Activated CD8-positive, alpha-beta T cell treated with anti-CD3 and anti-CD28 coated beads for 36 hours (primary cell): ENCODE measurements at regions of chr12 and their contacts with region 1.

Region 1: DNA sequence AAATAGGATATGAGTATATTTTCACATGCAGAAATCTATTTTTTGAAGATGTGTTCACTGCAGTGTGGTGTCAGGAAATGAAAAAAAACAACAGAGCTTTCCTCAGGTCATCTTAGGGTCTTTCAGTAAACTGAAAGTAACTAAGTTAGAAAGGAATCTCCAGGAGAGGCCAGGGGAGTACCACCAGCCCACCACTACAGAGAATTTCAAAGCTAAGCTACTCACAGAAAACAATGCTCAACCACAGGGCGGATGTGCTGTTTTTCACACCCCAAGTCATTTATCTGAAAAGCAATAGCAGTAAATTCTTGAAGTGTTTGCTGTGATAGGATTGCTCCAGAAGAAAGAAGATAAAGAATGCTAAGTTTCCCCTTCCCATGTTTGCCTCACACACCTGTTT is 79.0 kb downstream of the IFNG start:
- DNase-seq: peak; percentile 85
- ATAC-seq: peak; percentile 94
- H3K4me3 Mint-ChIP-seq: no peak overlapping the region
- H3K27ac Mint-ChIP-seq: peak overlapping the region; percentile 51
- H3K4me1 Mint-ChIP-seq: peaks cover 36% of the 10 kb centered on the region
- H3K27me3 Mint-ChIP-seq: no peaks in the 10 kb centered on the region
- CTCF ChIP-seq: no peak

Region 2: DNA sequence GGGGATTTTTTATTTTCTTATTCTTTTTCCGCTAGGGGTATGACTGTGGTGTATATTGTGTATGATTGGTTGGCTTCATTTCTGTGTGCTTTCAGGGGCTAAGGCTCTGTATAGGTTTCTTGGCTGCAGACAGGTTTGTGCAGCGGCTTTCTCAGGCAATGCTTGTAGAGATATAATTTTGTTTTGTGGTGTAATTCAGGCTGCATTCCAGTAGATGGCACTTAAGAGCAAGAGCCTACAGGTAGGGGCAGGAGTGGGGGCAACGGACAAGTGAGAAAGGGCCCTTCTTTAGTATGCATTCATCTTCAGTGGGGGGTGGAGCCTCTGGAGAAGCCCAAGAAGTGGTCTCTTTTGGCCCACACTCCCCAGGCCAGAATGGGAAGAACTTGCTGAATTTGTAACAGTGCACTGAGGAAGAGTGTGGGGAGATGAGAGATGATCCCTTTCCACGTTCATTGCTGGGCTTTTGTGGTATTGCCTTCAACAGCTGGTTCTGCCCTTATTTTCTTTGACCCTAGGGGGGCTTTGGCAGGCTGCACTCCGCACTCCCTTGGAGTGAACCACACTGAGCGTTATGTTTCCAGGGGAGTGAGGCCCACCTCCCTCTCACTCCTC is 12.7 kb before region 1 on chr12:
- CTCF ChIA-PET with region 1: interaction called, 20 read pairs
- POLR2A ChIA-PET with region 1: interaction called, 4 read pairs
- intact Hi-C with region 1: no loop called
- DNase-seq: peak; percentile 12
- ATAC-seq: peak; percentile 56
- H3K4me3 Mint-ChIP-seq: no peak overlapping the region
- H3K27ac Mint-ChIP-seq: no peak overlapping the region
- H3K4me1 Mint-ChIP-seq: peaks cover 16% of the 10 kb centered on the region
- H3K27me3 Mint-ChIP-seq: no peaks in the 10 kb centered on the region
- CTCF ChIP-seq: peak; percentile 34

Region 3: DNA sequence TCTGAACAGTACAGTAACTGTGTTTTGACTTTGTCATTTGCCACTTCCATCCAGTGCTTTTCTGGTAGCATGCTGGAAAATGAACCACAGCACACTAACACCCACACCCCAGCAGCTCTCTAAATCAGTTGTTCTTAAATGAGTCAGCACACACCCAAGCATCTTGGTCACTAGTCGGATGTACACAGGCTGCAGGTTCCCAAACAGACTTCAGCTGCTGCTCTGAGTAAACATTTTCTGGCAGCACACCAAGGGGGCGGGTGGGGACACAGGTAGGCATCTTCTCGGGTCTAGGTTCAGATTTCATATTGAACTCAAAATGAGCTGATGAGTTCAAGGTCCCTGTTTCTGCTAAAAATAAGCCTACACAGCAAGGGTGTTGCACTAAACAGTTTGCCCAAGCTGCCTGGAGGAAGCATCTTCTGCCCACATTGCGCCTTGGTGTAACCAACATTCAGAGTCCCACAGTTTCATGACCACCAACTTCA is 39.2 kb after region 1 on chr12:
- CTCF ChIA-PET with region 1: interaction called, 3 read pairs
- POLR2A ChIA-PET with region 1: interaction called, 5 read pairs
- intact Hi-C with region 1: loop called (anchors 5 kb)
- DNase-seq: peak; percentile 86
- ATAC-seq: peak; percentile 72
- H3K4me3 Mint-ChIP-seq: peak overlapping the region; percentile 11
- H3K27ac Mint-ChIP-seq: no peak overlapping the region
- H3K4me1 Mint-ChIP-seq: peaks cover 26% of the 10 kb centered on the region
- H3K27me3 Mint-ChIP-seq: peaks cover 2% of the 10 kb centered on the region
- CTCF ChIP-seq: no peak

Region 4: DNA sequence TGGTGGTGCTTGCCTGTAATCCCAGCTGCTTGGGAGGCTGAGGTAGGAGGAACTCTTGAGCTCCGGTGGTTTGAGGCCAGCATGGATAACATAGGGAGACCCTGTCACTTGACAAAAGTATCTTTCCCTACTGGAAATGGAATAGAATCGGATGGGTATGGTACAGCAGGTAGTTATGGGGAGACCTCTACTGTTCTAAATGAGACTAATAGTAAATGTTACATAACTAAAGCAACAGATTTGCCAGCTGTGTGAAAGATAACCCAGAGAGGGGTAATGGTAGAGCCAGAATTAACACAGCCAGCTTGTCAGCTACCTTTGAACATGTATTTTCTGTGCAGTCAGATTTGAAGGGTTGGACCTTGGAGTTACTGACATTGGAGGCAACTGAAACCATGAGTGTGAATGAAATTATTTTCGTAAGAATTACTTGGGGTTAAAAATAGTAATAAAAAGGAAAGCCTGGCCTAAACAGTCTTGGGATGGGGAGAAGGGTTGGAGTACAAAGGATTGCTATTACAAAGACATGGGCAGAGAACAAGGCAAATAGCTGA is 584.5 kb after region 1 on chr12:
- CTCF ChIA-PET with region 1: no interaction called
- POLR2A ChIA-PET with region 1: no interaction called
- intact Hi-C with region 1: no loop called
- DNase-seq: no peak
- ATAC-seq: no peak
- H3K4me3 Mint-ChIP-seq: no peak overlapping the region
- H3K27ac Mint-ChIP-seq: peak overlapping the region; percentile 30
- H3K4me1 Mint-ChIP-seq: peaks cover 28% of the 10 kb centered on the region
- H3K27me3 Mint-ChIP-seq: no peaks in the 10 kb centered on the region
- CTCF ChIP-seq: no peak